Activated T-helper 1 cell treated with anti-CD3 and anti-CD28 coated beads, Interleukin-12 subunit alpha, Interleukin-12 subunit beta, Interleukin-2, Interleukin-4 antibody, amounts not matched to agents 30 ng/mL and 10 ng/mL and 1 ng/mL, durations not matched to agents 14 hours and 24 hours and 36 hours (primary cell): ENCODE measurements at regions of chr1 and their contacts with region 1.

Region 1: DNA sequence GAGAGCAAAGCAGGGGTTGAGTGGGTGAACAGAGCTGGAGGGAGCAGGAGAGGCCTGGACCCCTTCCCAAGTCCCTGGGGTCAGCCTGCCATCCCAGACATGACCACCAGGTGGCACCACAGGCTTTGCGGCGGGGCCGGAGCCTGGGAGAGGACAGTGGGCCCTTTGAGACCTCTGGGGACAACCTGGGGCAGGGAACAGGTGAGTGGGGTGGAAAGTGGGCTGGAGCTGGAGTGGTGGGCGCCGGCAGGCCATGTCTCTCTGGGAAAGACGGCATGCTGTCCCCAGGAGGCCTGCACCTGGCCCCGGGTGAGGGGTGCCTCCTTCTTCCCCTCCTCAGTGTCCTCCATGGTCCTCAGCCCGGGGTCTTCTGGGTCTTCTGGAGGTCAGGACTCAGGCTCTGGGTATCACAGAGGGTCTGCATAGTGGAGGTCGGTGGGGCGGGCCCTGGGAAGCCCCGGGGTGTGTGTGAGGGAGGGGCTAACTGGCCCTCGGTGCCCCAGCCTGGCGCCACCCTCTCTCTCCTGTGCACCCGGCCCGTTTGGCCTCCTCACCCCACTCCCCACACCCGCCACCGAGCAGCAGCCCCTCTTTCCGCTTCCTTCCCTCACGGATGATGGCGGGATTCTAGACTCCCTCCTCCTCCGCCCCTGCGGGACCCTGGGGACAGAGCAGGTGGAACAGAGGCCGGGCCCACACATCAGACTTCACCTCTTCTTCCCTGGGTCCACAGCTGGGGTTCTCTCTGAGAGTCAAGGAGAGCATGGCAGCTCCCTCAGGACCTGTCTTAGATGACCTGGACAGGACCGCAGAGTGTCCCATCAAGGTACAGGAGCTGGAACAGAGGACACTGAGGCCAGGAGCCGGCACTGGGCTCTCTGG is 28.4 kb upstream of the PKP1 start:
- DNase-seq: peak; percentile 27
- H3K4me3 Mint-ChIP-seq: no peak overlapping the region
- H3K27ac Mint-ChIP-seq: no peak overlapping the region
- H3K4me1 Mint-ChIP-seq: no peaks in the 10 kb centered on the region
- H3K27me3 Mint-ChIP-seq: no peaks in the 10 kb centered on the region

Region 2: DNA sequence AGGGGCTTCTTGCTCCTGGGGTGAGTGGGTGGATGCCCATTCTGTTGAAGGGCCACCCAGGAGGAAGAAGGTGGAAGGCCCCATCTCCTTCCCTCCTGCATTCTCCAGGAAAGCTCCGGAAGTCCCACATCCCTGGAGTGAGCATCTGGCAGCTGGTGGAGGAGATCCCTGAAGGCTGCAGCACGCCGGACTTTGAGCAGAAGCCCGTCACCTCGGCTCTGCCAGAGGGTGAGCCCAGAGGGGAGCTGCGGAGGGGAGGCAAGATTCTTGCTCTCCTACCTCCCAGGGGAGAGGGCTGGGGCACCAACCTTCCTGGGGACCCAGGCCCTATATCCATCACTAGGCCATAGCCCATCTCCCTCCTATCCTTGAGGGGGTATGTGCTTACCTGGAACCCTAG is 60.8 kb before region 1 on chr1:
- intact Hi-C with region 1: no loop called
- DNase-seq: no peak
- H3K4me3 Mint-ChIP-seq: no peak overlapping the region
- H3K27ac Mint-ChIP-seq: no peak overlapping the region
- H3K4me1 Mint-ChIP-seq: no peaks in the 10 kb centered on the region
- H3K27me3 Mint-ChIP-seq: peaks cover 4% of the 10 kb centered on the region

Region 3: DNA sequence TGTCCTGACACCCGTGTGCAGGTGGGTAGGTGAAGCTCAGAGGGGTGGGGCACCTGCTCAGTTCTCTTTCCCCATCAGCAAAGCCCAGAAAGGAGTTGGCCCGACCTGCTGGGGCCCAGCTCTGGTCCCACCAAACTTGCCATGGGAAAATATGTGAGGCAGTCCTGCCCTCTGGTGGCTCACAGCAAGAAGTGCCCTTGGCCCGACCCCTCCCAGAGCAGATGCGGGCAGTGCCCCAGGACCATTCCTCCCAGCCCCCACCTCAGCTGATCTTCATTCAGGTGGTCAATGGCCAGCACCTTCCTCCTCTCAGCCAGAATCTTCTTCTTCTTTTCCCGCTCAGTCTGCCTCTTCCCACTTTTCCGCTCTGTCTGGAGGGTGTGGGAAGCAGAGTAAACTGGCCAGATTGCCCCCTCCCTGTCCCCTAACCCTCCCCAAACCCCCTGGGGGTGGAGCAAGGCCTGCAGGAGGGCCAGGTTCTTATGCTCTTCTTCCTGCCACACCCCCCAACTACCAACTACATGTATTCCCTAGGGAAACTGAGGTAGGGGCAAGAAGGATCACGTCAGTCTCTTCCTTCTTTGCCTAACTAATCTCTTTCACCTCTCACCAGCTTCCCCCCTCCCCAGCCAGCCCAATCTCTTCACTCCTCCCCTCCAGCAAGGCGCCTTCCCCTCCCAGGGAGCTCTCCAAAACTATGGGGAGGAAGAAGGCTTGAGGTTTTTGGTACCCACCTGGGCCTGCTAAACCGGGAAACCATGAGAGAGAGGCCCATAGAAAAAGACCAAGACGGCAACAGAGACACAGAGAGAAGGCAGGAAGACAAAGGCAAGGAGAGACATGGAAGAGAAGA is 107.0 kb after region 1 on chr1:
- intact Hi-C with region 1: loop called (anchors 1 kb)
- DNase-seq: no peak
- H3K4me3 Mint-ChIP-seq: no peak overlapping the region
- H3K27ac Mint-ChIP-seq: no peak overlapping the region
- H3K4me1 Mint-ChIP-seq: no peaks in the 10 kb centered on the region
- H3K27me3 Mint-ChIP-seq: peaks cover 2% of the 10 kb centered on the region

Region 4: DNA sequence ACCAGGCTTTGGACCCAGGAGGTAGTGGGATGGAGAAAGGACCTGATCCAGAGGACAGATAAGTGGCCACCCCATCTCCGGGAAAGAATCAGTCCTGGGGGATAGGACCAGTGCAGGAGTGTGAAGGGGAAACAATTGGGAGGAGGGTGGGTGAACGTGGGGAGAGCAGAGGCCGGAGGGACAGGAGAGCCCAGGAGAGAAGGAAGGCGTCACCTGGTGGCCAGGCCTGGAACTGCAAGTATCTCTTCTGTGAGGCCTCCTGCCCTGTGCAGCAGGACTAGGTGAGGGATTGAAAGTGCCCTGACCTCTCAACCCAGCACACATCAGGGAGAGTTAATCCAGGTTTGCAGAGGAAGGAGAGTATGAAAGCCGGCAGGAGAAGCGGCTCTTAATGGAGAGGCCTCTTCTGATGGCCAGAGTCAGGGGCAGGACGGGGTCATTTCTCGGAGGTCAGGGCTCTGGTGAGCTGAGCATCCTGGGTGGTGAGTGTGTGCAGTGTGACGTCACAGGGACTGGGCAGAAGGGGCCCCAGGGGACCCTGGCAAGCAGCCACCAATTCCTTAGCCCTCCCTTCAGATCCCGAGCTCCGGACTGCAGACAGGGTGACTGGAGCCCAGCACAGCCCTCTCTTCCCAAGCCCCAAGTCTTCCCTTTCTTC is 153.4 kb after region 1 on chr1:
- intact Hi-C with region 1: loop called (anchors 1 kb)
- DNase-seq: peak; percentile 52
- H3K4me3 Mint-ChIP-seq: no peak overlapping the region
- H3K27ac Mint-ChIP-seq: no peak overlapping the region
- H3K4me1 Mint-ChIP-seq: no peaks in the 10 kb centered on the region
- H3K27me3 Mint-ChIP-seq: peaks cover 4% of the 10 kb centered on the region